GM12878 (cell line): ENCODE measurements at regions of chr1 and their contacts with region 1.

Region 1: DNA sequence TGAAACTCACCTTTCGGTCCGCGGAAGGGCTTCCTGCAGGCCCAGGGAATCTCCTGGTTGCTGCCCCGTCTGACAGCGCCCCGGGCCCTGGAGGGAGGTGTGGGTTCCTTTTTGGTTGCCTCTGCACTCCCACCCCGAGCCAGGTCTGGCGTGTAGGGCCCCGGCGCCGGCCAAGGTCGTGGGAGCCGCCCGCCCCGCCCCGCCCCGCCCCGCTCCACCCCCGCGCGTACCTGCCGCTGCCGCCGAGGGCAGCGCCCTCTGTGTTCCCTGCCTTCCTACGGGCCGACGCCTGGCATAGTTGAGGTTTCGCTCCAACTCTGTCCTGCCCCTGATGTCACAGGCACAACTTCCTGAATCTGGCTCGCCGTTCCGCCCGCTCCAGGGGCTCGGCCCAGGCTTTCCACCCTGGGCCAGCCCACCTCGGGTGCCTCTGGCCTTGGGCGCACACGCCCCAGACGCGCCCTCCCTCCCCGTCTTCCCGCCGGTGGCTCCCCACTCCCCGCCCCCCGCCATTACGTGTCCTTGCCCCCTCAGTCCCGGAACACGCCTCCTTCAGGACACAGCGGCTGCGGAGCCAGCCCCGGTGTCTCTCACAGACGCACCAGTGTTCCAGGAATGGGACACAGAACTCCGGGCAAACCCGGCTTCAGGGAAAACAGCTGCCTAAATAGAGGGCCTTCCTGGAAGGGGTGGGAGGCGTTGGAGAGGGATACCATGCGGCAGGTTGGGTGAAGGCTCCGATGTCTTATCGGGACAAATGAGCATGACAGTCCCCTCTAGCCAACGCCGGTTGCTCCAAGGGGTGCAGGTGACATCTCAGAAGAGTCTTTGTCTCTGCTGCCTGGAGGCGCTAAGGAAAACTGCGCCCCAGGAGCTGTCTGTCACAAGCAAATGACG is at the start of gene KIAA0040:
- DNase-seq: no peak
- ATAC-seq: peak; percentile 78
- H3K4me3 ChIP-seq: peak within 1 kb of the TSS; percentile 83
- H3K27ac ChIP-seq: peak within 1 kb of the TSS; percentile 23
- H3K4me1 ChIP-seq: peaks cover 37% of the 10 kb centered on the region
- H3K27me3 ChIP-seq: no peaks in the 10 kb centered on the region
- CTCF ChIP-seq: peak in 1 of 3 experiments; percentile 27; a peak in 2 of 6 replicates
- EP300 ChIP-seq: no peak
- POLR2A ChIP-seq: peak; percentile 72
- RAD21 ChIP-seq: no peak
- polyA plus RNA-seq, gene KIAA0040: 7.6 to 8.3 TPM

Region 2: DNA sequence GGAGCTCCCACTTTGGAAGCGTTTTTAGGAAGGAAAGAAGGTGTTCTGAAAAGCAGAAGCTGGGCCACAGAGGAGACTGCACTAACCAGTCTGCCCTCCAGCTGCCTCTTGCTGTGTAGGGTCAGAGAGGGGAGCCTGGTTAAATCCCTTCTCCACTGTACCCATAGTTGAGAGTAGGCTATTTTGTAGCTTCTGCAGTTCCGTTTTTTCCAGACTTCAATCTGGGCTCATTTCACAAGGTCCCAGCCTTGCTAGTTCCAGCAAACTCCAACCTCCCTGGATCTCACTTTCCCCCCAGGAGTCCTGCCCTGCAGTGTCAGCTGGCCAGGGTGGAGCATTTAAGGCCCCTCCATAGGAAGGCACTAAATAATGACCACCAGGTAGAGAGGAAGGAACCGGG is 114.2 kb before region 1 on chr1:
- CTCF ChIA-PET with region 1: no interaction called
- POLR2A ChIA-PET with region 1: no interaction called
- RAD21 ChIA-PET with region 1: no interaction called
- SMC1A ChIA-PET with region 1: no interaction called
- in situ Hi-C with region 1: no loop called
- intact Hi-C with region 1: no loop called
- DNase-seq: no peak
- ATAC-seq: no peak
- H3K4me3 ChIP-seq: no peak overlapping the region
- H3K27ac ChIP-seq: no peak overlapping the region
- H3K4me1 ChIP-seq: no peaks in the 10 kb centered on the region
- H3K27me3 ChIP-seq: peaks cover 2% of the 10 kb centered on the region in 2 experiments; a peak in 2 of 4 replicates
- CTCF ChIP-seq: no peak
- EP300 ChIP-seq: no peak
- POLR2A ChIP-seq: no peak
- RAD21 ChIP-seq: no peak

Region 3: GRCh38 chr1:175174309-175175165 is 18.3 kb before region 1 on chr1:
- CTCF ChIA-PET with region 1: interaction called, 6 read pairs
- POLR2A ChIA-PET with region 1: interaction called, 6 read pairs
- RAD21 ChIA-PET with region 1: interaction called, 4 read pairs
- SMC1A ChIA-PET with region 1: interaction called, 18 read pairs
- in situ Hi-C with region 1: no loop called
- intact Hi-C with region 1: no loop called
- DNase-seq: no peak
- ATAC-seq: peak; percentile 87
- H3K4me3 ChIP-seq: no peak overlapping the region; the same call in 1 of the 2 replicates
- H3K27ac ChIP-seq: no peak overlapping the region; the same call in 1 of the 2 replicates
- H3K4me1 ChIP-seq: peaks cover 10% of the 10 kb centered on the region; the same call in 1 of the 2 replicates
- H3K27me3 ChIP-seq: no peaks in the 10 kb centered on the region
- CTCF ChIP-seq: no peak
- EP300 ChIP-seq: no peak; a peak in 1 of 4 replicates
- POLR2A ChIP-seq: no peak
- RAD21 ChIP-seq: no peak

Region 4: DNA sequence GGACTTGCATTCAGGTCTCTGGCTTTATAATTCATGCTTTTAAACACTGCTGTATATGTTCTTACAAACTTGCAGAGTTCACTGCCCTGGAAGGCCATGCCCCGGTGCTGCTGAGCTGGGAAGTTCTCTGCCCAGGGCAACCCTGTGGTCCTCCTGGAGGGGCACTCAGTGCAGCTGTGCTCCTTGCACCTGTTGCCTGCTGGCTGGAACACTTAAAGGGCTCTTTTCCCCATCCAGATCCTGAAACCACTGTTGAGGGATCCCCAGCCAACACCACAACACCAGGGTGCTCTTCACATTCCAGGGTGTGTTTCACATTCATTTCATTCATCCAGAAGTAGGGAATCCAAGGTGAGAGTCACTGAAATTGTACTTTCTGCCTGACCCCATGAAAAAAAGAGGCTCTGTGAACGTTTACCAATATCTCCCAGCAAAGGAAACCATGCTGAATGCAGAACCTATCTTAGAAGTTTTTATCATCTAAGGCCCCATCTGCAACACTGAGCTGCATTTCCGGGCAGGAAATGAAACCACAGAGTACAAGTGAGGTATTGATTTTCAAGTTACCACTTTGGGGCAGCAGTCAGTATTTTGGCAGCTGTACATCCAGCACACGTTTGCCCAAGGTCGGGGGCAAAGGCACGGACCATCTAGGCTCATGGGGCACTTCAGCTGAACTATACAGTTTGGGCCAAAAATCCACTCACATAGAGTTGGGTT is 16.1 kb after region 1 on chr1:
- CTCF ChIA-PET with region 1: interaction called, 17 read pairs
- POLR2A ChIA-PET with region 1: interaction called, 24 read pairs
- RAD21 ChIA-PET with region 1: interaction called, 24 read pairs
- SMC1A ChIA-PET with region 1: interaction called, 51 read pairs
- in situ Hi-C with region 1: no loop called
- intact Hi-C with region 1: no loop called
- DNase-seq: peak; percentile 62
- ATAC-seq: peak; percentile 85
- H3K4me3 ChIP-seq: peak overlapping the region; percentile 30; the same call in 1 of the 2 replicates
- H3K27ac ChIP-seq: peak overlapping the region; percentile 78
- H3K4me1 ChIP-seq: peaks cover 27% of the 10 kb centered on the region
- H3K27me3 ChIP-seq: no peaks in the 10 kb centered on the region
- CTCF ChIP-seq: no peak
- EP300 ChIP-seq: no peak
- POLR2A ChIP-seq: peak; percentile 40; the same call in 1 of the 2 replicates
- RAD21 ChIP-seq: no peak

Region 5: GRCh38 chr1:175221666-175222175 is 28.8 kb after region 1 on chr1:
- CTCF ChIA-PET with region 1: interaction called, 6 read pairs
- POLR2A ChIA-PET with region 1: no interaction called
- RAD21 ChIA-PET with region 1: interaction called, 4 read pairs
- SMC1A ChIA-PET with region 1: interaction called, 28 read pairs
- in situ Hi-C with region 1: no loop called
- intact Hi-C with region 1: no loop called
- DNase-seq: no peak
- ATAC-seq: no peak
- H3K4me3 ChIP-seq: no peak overlapping the region
- H3K27ac ChIP-seq: no peak overlapping the region
- H3K4me1 ChIP-seq: peaks cover 23% of the 10 kb centered on the region
- H3K27me3 ChIP-seq: no peaks in the 10 kb centered on the region
- CTCF ChIP-seq: no peak
- EP300 ChIP-seq: no peak
- POLR2A ChIP-seq: no peak
- RAD21 ChIP-seq: no peak